Activated CD8-positive, alpha-beta memory T cell treated with anti-CD3 and anti-CD28 coated beads, Interleukin-2, amount 10 ng/mL, durations not matched to agents 7 days and 5 days (primary cell): ENCODE measurements at regions of chr15 and their contacts with region 1.

Region 1: GRCh38 chr15:90387537-90388461 is at the start of gene IQGAP1:
- DNase-seq: peak; percentile 99
- ATAC-seq: peak; percentile 93
- H3K4me3 Mint-ChIP-seq: peak within 1 kb of the TSS; percentile 95
- H3K27ac Mint-ChIP-seq: peak within 1 kb of the TSS; percentile 94
- H3K4me1 Mint-ChIP-seq: peaks cover 45% of the 10 kb centered on the region
- H3K27me3 Mint-ChIP-seq: no peaks in the 10 kb centered on the region
- total RNA-seq, gene IQGAP1: 217 to 221 TPM

Region 2: DNA sequence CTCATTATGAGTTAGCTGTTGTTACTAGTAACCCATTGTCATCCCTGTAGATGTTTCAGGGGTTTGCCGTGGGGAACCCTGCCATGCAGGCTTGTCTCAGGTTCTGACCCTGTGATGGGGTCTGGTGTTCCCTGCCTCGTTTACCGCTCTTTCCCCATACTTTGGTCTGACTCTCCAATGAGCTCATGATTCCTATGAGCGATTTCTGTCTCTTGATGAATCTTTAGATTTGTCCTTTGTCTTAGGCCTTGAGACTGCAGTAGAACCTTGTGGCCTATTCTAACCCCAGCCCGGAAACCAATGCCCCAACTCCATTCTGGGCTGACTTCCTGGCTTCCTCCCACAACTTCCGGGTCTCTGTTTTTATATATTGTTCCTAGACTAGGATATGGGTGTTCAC is 11.0 kb before region 1 on chr15:
- CTCF ChIA-PET with region 1: interaction called, 14 read pairs
- DNase-seq: peak; percentile 93
- ATAC-seq: peak; percentile 92
- H3K4me3 Mint-ChIP-seq: peak overlapping the region; percentile 47
- H3K27ac Mint-ChIP-seq: peak overlapping the region; percentile 94
- H3K4me1 Mint-ChIP-seq: peaks cover 36% of the 10 kb centered on the region
- H3K27me3 Mint-ChIP-seq: no peaks in the 10 kb centered on the region

Region 3: GRCh38 chr15:90400406-90401314 is 12.9 kb after region 1 on chr15:
- CTCF ChIA-PET with region 1: interaction called, 16 read pairs
- DNase-seq: peak; percentile 86
- ATAC-seq: peak; percentile 97
- H3K4me3 Mint-ChIP-seq: peak overlapping the region; percentile 58
- H3K27ac Mint-ChIP-seq: peak overlapping the region; percentile 94
- H3K4me1 Mint-ChIP-seq: peaks cover 67% of the 10 kb centered on the region
- H3K27me3 Mint-ChIP-seq: no peaks in the 10 kb centered on the region

Region 4: DNA sequence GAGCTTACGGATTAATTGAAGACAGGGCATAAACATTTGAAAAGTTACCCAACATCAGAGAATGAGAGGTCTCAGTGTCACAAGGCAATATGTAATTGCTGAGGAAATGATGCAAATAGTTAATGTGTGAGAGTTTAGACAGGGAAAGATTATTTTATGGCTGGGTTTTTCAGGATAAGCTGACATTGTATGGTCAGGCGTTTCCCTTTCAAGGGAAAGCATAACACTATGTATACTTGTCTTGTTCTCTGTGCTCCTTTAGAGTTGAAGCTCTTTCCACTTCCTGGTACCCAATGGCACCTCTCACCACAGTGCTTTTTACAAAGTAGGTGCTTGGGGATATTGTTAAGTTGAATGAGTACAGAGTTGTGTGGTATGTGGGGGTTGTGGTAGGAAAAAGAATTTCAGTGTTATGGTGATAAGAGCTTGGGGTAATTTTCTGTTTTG is 20.1 kb after region 1 on chr15:
- CTCF ChIA-PET with region 1: interaction called, 14 read pairs
- DNase-seq: peak; percentile 79
- ATAC-seq: peak; percentile 93
- H3K4me3 Mint-ChIP-seq: peak overlapping the region; percentile 63
- H3K27ac Mint-ChIP-seq: peak overlapping the region; percentile 81
- H3K4me1 Mint-ChIP-seq: peaks cover 82% of the 10 kb centered on the region
- H3K27me3 Mint-ChIP-seq: no peaks in the 10 kb centered on the region